ENCODE measurements at regions of chr1 and their contacts with region 1.

Region 1: GRCh38 chr1:241640029-241640818 is at the starts of genes CHML and OPN3:
- DNase-seq: peak; percentile 89
- H3K4me3 Mint-ChIP-seq: peak within 1 kb of the TSS; percentile 89
- H3K27ac Mint-ChIP-seq: peak within 1 kb of the TSS; percentile 83
- H3K4me1 Mint-ChIP-seq: peaks cover 45% of the 10 kb centered on the region
- H3K27me3 Mint-ChIP-seq: no peaks in the 10 kb centered on the region
- total RNA-seq, gene CHML: 18.7 and 20.2 TPM in 2 replicates
- total RNA-seq, gene OPN3: 15.1 and 17.5 TPM in 2 replicates

Region 2: DNA sequence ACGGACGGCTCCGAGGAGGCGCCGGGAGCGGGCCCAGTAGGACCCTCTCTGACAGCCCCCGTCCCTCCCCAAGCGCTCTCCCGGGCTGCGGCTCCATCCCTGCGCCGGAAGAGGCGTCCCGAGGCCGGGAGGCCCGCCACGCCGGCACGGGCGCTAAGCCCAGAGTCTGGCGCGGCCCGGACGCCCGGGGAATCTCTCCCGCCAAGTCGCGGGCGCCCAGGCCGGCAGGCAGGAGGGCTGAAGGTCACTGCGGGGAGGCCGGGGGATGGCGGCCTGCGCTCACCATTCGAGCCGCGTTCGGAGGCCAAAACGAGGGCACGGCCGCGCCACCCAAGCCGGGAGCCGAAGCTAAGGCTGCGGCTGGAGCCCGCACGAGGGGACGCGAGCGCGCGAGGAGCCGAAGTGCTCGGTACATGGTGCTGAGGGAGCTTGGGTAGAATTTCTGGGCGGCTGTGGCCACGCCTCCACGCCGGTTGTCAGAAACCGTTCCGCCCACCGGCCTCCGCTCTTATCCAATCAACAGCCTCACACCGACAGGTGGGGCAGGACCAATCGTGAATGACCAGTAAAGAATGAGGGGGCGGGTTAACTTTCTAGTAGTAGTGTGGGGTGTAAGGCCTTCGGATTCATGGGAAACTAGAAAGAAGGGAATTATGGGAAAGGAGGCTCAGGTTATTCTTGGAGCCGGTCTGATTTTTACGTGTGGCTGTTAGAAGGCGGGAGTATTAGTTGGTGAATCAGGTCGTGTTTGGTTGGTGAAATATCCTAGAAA is 120.7 kb before region 1 on chr1 and contains the start of gene FH:
- intact Hi-C with region 1: loop called (anchors 1 kb)
- DNase-seq: peak; percentile 92
- H3K4me3 Mint-ChIP-seq: peak within 1 kb of the TSS; percentile 90
- H3K27ac Mint-ChIP-seq: peak within 1 kb of the TSS; percentile 79
- H3K4me1 Mint-ChIP-seq: peaks cover 21% of the 10 kb centered on the region
- H3K27me3 Mint-ChIP-seq: peaks cover 26% of the 10 kb centered on the region
- total RNA-seq, gene FH: 96.5 and 102 TPM in 2 replicates

Region 3: DNA sequence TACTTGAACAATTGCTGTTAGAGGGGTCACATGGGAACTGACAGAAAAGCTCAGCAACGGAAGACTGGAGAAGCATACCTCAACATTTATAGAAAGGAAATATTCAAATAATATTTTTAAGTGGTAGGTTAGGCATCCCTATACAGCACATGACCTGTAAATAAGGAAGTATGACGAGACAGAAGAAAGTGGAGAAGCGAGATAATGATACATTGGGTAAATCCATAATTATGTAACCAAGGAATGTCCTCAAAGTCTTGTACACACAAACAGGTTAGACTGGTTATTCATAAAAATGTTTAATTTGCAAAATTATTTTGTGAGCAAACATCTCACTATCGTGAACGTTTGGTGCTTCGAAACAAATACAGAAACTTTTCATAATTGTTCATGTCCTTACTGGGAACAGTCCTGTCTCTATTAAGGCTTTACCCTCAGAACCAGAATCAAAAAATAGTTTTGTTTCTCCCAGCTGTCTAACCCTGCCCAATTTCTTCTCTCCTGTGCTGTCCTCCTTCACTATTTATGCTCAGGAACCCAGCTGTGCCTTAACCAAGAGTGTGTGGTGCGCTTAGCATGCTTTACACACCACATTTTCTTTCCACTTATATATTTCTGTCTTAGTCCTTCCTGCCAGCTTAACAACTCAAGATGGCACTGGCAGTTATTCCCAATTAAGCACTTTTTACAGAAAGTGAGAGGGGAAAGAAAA is 97.9 kb before region 1 on chr1:
- intact Hi-C with region 1: no loop called
- DNase-seq: no peak
- H3K4me3 Mint-ChIP-seq: no peak overlapping the region
- H3K27ac Mint-ChIP-seq: no peak overlapping the region
- H3K4me1 Mint-ChIP-seq: no peaks in the 10 kb centered on the region
- H3K27me3 Mint-ChIP-seq: peaks cover 11% of the 10 kb centered on the region

Region 4: GRCh38 chr1:241592273-241592958 is 47.8 kb before region 1 on chr1:
- intact Hi-C with region 1: no loop called
- DNase-seq: no peak
- H3K4me3 Mint-ChIP-seq: no peak overlapping the region
- H3K27ac Mint-ChIP-seq: peak overlapping the region; percentile 53
- H3K4me1 Mint-ChIP-seq: peaks cover 20% of the 10 kb centered on the region
- H3K27me3 Mint-ChIP-seq: no peaks in the 10 kb centered on the region

Region 5: GRCh38 chr1:241617426-241617825 is 22.8 kb before region 1 on chr1:
- intact Hi-C with region 1: no loop called
- DNase-seq: no peak
- H3K4me3 Mint-ChIP-seq: no peak overlapping the region
- H3K27ac Mint-ChIP-seq: no peak overlapping the region
- H3K4me1 Mint-ChIP-seq: peaks cover 24% of the 10 kb centered on the region
- H3K27me3 Mint-ChIP-seq: no peaks in the 10 kb centered on the region

Region 6: DNA sequence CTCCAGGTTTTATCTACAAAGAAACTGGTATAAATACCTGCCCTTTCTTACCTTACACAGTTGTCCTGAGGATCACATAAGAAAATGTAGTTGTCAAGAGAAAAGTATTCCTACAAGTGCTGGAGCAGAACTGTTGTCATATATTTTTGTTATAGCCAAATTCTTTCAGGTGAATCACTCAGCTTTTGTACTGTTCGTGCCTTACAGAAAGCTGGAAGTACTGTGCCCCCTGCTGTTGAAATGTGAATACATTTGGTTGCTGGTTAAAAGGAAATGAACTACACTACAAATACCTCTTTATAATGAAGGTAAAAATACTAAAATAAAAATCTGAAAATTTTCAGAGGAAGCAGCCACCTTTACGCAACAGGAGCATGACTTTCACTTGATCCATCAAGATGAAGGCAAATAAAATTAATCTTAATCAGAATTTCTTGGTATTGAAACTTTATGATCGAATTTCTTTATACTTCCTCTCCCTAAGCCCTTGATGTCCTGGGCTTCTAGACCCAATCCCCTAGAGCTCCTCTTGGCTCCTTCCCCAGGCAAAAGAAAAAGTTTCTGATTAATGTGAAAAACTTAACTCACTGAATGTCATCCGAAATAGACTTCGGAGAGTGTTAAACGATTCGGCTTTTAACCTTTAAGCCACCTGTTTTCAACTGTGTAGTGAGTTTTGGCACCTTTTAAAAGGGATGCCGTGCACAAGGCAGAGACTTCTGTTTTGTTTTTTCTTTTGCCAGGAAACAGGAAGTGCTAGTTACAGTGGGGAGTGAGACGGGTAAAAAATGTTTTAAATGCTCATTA is 12.6 kb before region 1 on chr1:
- intact Hi-C with region 1: loop called (anchors 1 kb)
- DNase-seq: no peak
- H3K4me3 Mint-ChIP-seq: peak overlapping the region; percentile 27
- H3K27ac Mint-ChIP-seq: peak overlapping the region; percentile 39
- H3K4me1 Mint-ChIP-seq: peaks cover 14% of the 10 kb centered on the region
- H3K27me3 Mint-ChIP-seq: no peaks in the 10 kb centered on the region

Region 7: GRCh38 chr1:241666419-241666818 is 26.2 kb after region 1 on chr1:
- intact Hi-C with region 1: no loop called
- DNase-seq: no peak
- H3K4me3 Mint-ChIP-seq: no peak overlapping the region
- H3K27ac Mint-ChIP-seq: no peak overlapping the region
- H3K4me1 Mint-ChIP-seq: no peaks in the 10 kb centered on the region
- H3K27me3 Mint-ChIP-seq: peaks cover 1% of the 10 kb centered on the region

Region 8: DNA sequence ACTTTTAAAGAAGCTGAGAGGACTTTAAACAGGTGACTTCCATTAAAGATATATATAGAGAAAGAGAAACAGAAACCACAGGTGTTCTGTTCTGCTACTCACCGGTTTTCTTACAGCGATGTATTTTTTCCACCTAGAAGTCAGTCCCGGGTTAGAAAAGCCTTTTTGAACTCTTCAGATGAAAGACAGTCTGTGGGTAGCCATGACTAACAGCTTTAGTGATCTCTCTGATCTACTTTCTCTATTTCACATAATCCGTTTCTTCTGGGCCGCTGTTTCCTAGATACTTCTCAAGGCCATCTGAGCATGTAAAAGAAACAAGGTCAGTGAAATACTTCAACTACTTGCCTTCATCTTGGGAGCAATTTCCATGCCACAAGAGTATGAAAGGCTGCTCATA is 37.0 kb after region 1 on chr1:
- intact Hi-C with region 1: loop called (anchors 1 kb)
- DNase-seq: peak; percentile 19
- H3K4me3 Mint-ChIP-seq: no peak overlapping the region
- H3K27ac Mint-ChIP-seq: no peak overlapping the region
- H3K4me1 Mint-ChIP-seq: peaks cover 11% of the 10 kb centered on the region
- H3K27me3 Mint-ChIP-seq: peaks cover 11% of the 10 kb centered on the region

Region 9: DNA sequence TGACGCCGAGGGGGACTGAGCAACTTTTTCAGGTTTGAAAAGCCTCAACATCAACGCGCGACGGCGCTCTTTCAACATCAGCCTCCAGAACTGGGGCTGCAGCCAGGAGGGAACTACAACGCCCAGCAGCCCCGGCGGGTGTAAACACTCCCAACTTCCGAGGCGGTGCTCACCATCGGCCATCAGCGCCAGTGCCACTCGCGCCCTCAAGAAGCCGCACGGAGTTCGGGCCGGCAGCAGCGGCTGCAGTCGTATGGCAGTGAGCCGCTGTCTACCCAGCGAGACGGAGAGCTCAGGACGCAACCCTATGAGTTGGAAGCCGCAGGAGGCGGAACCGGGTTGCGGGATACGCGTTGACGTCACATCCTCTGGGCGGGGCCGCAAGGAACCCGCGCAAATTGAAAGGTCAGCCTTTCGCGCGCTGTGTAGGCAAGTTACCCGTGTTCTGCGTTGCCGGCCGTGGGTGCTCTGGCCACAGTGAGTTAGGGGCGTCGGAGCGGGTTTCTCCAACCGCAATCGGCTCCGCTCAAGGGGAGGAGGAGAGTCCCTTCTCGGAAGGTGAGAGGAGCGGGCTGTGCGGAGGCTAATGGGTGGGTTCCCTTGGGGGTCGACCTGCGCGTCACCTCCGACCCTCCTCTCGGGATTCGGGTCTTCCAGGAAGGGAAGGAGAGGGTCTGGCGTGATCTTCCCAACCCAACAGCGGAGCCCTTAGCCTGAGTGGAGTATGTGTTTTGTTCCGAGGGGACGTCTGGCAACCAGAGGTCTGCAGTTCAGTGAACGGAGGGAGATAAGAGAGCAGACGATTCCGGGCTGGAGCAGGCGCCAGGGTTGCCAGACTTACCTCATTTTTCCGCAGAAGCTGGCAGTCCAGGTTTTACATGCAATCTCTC is 207.8 kb after region 1 on chr1 and contains the start of gene EXO1:
- intact Hi-C with region 1: loop called (anchors 1 kb)
- DNase-seq: peak; percentile 86
- H3K4me3 Mint-ChIP-seq: peak within 1 kb of the TSS; percentile 98
- H3K27ac Mint-ChIP-seq: peak within 1 kb of the TSS; percentile 100
- H3K4me1 Mint-ChIP-seq: peaks cover 26% of the 10 kb centered on the region
- H3K27me3 Mint-ChIP-seq: peaks cover 7% of the 10 kb centered on the region
- total RNA-seq, gene EXO1: 49.2 and 52.5 TPM in 2 replicates

Measured in activated T-helper 2 cell treated with anti-CD3 and anti-CD28 coated beads, Interferon-gamma antibody, Interleukin-2, Interleukin-4, amounts not matched to agents 10 μg/mL and 5 μg/mL and 100 μg/mL, durations not matched to agents 14 hours and 24 hours and 36 hours (primary cell).